ENCODE measurements at regions of chr3 and their contacts with region 1.

Region 1: GRCh38 chr3:194134757-194135528 is 1.0 kb upstream of the HES1 start:
- DNase-seq: peak; percentile 55
- ATAC-seq: peak; percentile 64
- H3K4me3 ChIP-seq: peak overlapping the region; percentile 61
- H3K27ac ChIP-seq: peak overlapping the region; percentile 31; the same call in 1 of the 2 replicates
- H3K4me1 ChIP-seq: peaks cover 27% of the 10 kb centered on the region
- H3K27me3 ChIP-seq: peaks cover 1 to 3% of the 10 kb centered on the region in 2 experiments; a peak in 3 of 4 replicates
- CTCF ChIP-seq: no peak
- EP300 ChIP-seq: peak in 1 of 2 experiments; percentile 55; a peak in 1 of 4 replicates
- POLR2A ChIP-seq: 0 out of 2 replicates have a peak, but pooled peaks have one; percentile 16
- RAD21 ChIP-seq: no peak

Region 2: DNA sequence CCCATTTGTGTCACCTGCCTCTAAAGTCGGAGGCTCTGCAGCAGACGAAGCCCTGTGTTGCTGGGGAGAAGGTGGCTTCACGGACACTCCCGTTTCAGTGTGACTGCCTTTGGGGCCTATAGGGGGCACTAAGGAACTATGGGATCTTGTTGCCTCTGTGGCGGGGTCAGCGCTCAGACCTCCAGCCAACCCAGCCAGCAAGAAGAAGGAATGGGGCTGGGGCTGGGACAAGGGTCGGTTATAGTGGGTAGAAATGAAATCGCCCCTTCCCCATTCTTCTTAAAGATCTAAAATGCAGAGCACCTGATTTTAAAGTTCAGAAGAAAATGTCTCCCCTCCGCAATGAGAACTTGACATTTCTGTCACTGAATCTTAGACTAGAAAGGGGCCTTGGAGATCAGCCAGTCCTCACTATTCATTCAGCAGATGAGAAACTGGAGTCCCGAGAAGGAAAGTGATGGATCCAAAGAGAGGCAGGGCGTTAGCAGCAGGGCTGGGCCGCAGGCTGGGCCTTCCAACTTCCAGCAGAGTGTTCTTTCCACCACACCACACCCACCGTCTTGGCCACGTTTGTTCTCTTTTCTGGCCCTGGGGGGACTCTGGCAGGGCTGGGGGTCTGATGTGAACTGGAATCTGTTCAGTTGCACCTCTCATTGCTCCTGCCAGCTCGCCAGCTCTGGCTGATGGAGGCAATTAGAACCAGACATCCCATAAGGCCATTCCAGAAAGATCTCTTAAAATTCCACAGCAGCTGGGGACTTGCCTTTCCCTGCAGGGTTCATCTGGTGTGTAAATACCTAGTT is 346.6 kb before region 1 on chr3:
- CTCF ChIA-PET with region 1: interaction called, 6 read pairs
- POLR2A ChIA-PET with region 1: no interaction called
- RAD21 ChIA-PET with region 1: interaction called, 3 read pairs
- SMC1A ChIA-PET with region 1: no interaction called
- in situ Hi-C with region 1: loop called (anchors 10 kb)
- intact Hi-C with region 1: loop called (anchors 1 kb)
- DNase-seq: peak; percentile 9
- ATAC-seq: peak; percentile 98
- H3K4me3 ChIP-seq: no peak overlapping the region
- H3K27ac ChIP-seq: no peak overlapping the region
- H3K4me1 ChIP-seq: no peaks in the 10 kb centered on the region
- H3K27me3 ChIP-seq: no peaks in the 10 kb centered on the region; a peak in 1 of 4 replicates
- CTCF ChIP-seq: peak; percentile 69 to 76 (median 76)
- EP300 ChIP-seq: no peak
- POLR2A ChIP-seq: no peak
- RAD21 ChIP-seq: peak; percentile 85

Region 3: GRCh38 chr3:193869221-193870201 is 265.4 kb before region 1 on chr3:
- CTCF ChIA-PET with region 1: no interaction called
- POLR2A ChIA-PET with region 1: no interaction called
- RAD21 ChIA-PET with region 1: no interaction called
- SMC1A ChIA-PET with region 1: no interaction called
- in situ Hi-C with region 1: no loop called
- intact Hi-C with region 1: no loop called
- DNase-seq: no peak
- ATAC-seq: no peak
- H3K4me3 ChIP-seq: no peak overlapping the region
- H3K27ac ChIP-seq: no peak overlapping the region
- H3K4me1 ChIP-seq: peaks cover 25% of the 10 kb centered on the region
- H3K27me3 ChIP-seq: no peaks in the 10 kb centered on the region
- CTCF ChIP-seq: no peak
- EP300 ChIP-seq: no peak
- POLR2A ChIP-seq: no peak
- RAD21 ChIP-seq: no peak

Region 4: DNA sequence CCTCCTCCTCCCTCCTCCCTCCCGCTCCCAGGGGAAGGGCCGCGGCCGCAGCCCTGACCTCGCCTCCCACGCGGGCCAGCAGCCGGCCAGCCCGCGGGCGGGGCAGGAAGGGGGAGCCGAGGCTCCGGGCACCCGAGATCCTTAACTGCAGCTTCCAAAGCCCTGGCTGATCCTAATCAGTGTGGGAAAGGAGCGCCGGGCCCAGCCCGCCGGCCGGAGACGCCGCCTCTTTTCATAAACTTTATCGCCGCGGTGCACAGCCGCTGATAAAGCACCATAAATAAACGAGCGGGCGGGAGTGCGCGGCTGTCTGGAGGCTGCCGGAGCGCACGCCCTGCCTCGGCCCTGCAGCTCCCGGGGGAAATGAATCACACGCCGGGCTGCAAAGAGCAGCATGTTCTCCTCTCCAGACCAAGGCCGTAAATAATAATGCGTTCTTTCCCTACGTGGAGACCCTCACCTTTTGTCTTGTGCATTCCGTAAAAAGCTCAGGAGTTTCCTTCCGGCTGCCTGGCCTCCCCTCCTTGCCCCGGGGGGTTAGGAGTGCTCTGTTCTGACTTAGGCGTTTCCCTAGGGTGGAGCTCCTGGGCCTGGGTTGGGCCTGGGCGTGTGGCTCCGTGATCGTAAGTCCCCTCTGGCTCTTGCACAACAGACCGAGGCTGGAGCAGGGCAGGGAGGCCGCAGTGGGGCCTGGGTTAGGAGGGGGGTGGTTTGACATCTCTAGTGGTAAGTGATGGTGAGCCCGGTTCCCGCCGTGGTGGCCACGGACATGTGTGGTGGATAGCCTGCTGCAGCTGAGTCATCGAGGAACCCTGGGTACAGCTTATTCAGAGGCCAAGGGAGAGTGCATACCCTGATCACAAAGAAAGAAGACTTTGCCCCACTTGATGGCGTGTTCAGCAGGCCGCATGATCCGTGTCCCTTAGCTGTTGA is 131.6 kb before region 1 on chr3:
- CTCF ChIA-PET with region 1: no interaction called
- POLR2A ChIA-PET with region 1: no interaction called
- RAD21 ChIA-PET with region 1: interaction called, 4 read pairs
- SMC1A ChIA-PET with region 1: interaction called, 4 read pairs
- in situ Hi-C with region 1: no loop called
- intact Hi-C with region 1: loop called (anchors 2 kb)
- DNase-seq: peak; percentile 11
- ATAC-seq: peak; percentile 90
- H3K4me3 ChIP-seq: peak overlapping the region; percentile 71; the same call in 1 of the 2 replicates
- H3K27ac ChIP-seq: no peak overlapping the region
- H3K4me1 ChIP-seq: peaks cover 27% of the 10 kb centered on the region
- H3K27me3 ChIP-seq: no peaks in the 10 kb centered on the region; a peak in 2 of 4 replicates
- CTCF ChIP-seq: no peak
- EP300 ChIP-seq: no peak
- POLR2A ChIP-seq: no peak
- RAD21 ChIP-seq: no peak

Region 5: GRCh38 chr3:194103983-194104751 is 30.8 kb before region 1 on chr3:
- CTCF ChIA-PET with region 1: interaction called, 7 read pairs
- POLR2A ChIA-PET with region 1: interaction called, 3 read pairs
- RAD21 ChIA-PET with region 1: interaction called, 24 read pairs
- SMC1A ChIA-PET with region 1: interaction called, 23 read pairs
- in situ Hi-C with region 1: no loop called
- intact Hi-C with region 1: loop called (anchors 1 kb)
- DNase-seq: no peak
- ATAC-seq: peak; percentile 4; the same call in 2 of the 3 replicates
- H3K4me3 ChIP-seq: no peak overlapping the region
- H3K27ac ChIP-seq: no peak overlapping the region
- H3K4me1 ChIP-seq: peaks cover 43% of the 10 kb centered on the region
- H3K27me3 ChIP-seq: peaks cover 2 to 12% of the 10 kb centered on the region in 2 experiments
- CTCF ChIP-seq: no peak
- EP300 ChIP-seq: no peak
- POLR2A ChIP-seq: no peak
- RAD21 ChIP-seq: 0 out of 2 replicates have a peak, but pooled peaks have one; percentile 0

Region 6: GRCh38 chr3:194269610-194270145 is 134.7 kb after region 1 on chr3:
- CTCF ChIA-PET with region 1: no interaction called
- POLR2A ChIA-PET with region 1: no interaction called
- RAD21 ChIA-PET with region 1: no interaction called
- SMC1A ChIA-PET with region 1: no interaction called
- in situ Hi-C with region 1: no loop called
- intact Hi-C with region 1: no loop called
- DNase-seq: no peak
- ATAC-seq: no peak
- H3K4me3 ChIP-seq: no peak overlapping the region
- H3K27ac ChIP-seq: no peak overlapping the region
- H3K4me1 ChIP-seq: no peaks in the 10 kb centered on the region
- H3K27me3 ChIP-seq: peaks cover 0 to 1% of the 10 kb centered on the region in 2 experiments; a peak in 1 of 4 replicates
- CTCF ChIP-seq: no peak
- EP300 ChIP-seq: no peak
- POLR2A ChIP-seq: no peak
- RAD21 ChIP-seq: no peak

Region 7: GRCh38 chr3:194306109-194306686 is 171.3 kb after region 1 on chr3:
- CTCF ChIA-PET with region 1: interaction called, 3 read pairs
- POLR2A ChIA-PET with region 1: interaction called, 6 read pairs
- RAD21 ChIA-PET with region 1: interaction called, 13 read pairs
- SMC1A ChIA-PET with region 1: interaction called, 8 read pairs
- in situ Hi-C with region 1: loop called (anchors 5 kb)
- intact Hi-C with region 1: loop called (anchors 2 kb)
- DNase-seq: peak; percentile 61
- ATAC-seq: peak; percentile 74
- H3K4me3 ChIP-seq: no peak overlapping the region; the same call in 1 of the 2 replicates
- H3K27ac ChIP-seq: peak overlapping the region; percentile 75
- H3K4me1 ChIP-seq: peaks cover 46% of the 10 kb centered on the region
- H3K27me3 ChIP-seq: no peaks in the 10 kb centered on the region
- CTCF ChIP-seq: no peak
- EP300 ChIP-seq: no peak
- POLR2A ChIP-seq: no peak
- RAD21 ChIP-seq: no peak

Measured in GM12878 (cell line).